Naive thymus-derived CD4-positive, alpha-beta T cell (primary cell): ENCODE measurements at regions of chr22 and their contacts with region 1.

Region 1: GRCh38 chr22:23385291-23386244 is 194.5 kb downstream of the IGLL1 start:
- DNase-seq: peak; percentile 48 to 84 (median 71)
- ATAC-seq: peak; percentile 84
- H3K4me3 ChIP-seq: no peak overlapping the region
- H3K4me3 Mint-ChIP-seq: no peak overlapping the region
- H3K27ac ChIP-seq: no peak overlapping the region
- H3K27ac Mint-ChIP-seq: no peak overlapping the region
- H3K4me1 ChIP-seq: no peaks in the 10 kb centered on the region
- H3K4me1 Mint-ChIP-seq: no peaks in the 10 kb centered on the region
- H3K27me3 ChIP-seq: no peaks in the 10 kb centered on the region
- H3K27me3 Mint-ChIP-seq: no peaks in the 10 kb centered on the region

Region 2: DNA sequence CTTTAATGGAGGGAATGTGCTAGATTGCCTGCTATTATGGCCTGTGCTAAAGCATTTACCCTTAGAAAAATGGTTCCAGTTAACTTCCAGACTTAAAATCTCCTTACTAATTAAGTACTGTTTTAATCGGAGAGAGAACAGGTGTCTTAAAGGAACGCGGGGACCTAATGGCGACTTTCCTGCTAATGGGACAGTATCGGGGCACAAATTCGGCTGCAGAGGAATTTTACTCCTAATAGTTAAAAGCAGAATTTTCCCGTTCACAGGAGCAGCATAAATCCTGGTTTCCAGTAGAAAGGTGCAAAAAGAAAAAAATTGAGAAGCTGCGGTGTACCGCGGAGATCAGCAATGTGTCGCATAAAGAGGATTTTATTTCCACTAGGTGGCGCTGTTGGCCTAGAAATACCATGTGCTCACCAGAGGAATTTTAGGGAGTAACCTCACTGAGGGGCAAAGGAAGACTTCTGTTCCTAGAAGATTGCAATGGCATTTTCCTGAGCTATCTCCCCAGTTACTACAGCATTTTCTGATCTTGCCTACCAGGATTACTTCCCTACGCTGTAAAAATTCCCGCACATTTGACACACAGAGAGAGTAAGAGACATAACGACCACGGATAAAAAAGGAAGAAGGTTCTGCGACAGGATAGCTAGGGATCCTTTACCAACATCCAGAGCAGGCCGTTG is 921.6 kb before region 1 on chr22:
- CTCF ChIA-PET with region 1: no interaction called
- POLR2A ChIA-PET with region 1: no interaction called
- intact Hi-C with region 1: no loop called
- DNase-seq: peak; percentile 10 to 55 (median 42)
- ATAC-seq: peak; percentile 44
- H3K4me3 ChIP-seq: no peak overlapping the region
- H3K4me3 Mint-ChIP-seq: no peak overlapping the region
- H3K27ac ChIP-seq: no peak overlapping the region
- H3K27ac Mint-ChIP-seq: no peak overlapping the region
- H3K4me1 ChIP-seq: no peaks in the 10 kb centered on the region
- H3K4me1 Mint-ChIP-seq: no peaks in the 10 kb centered on the region
- H3K27me3 ChIP-seq: peaks cover 0 to 11% of the 10 kb centered on the region in 2 donors
- H3K27me3 Mint-ChIP-seq: peaks cover 27 to 50% (median 48%) of the 10 kb centered on the region in 5 donors

Region 3: GRCh38 chr22:22913989-22914388 is 471.6 kb before region 1 on chr22:
- CTCF ChIA-PET with region 1: no interaction called
- POLR2A ChIA-PET with region 1: no interaction called
- intact Hi-C with region 1: no loop called
- DNase-seq: no peak
- ATAC-seq: no peak
- H3K4me3 ChIP-seq: no peak overlapping the region
- H3K4me3 Mint-ChIP-seq: no peak overlapping the region
- H3K27ac ChIP-seq: no peak overlapping the region
- H3K27ac Mint-ChIP-seq: no peak overlapping the region
- H3K4me1 ChIP-seq: no peaks in the 10 kb centered on the region
- H3K4me1 Mint-ChIP-seq: peaks cover 0 to 2% (median 0%) of the 10 kb centered on the region in 7 donors
- H3K27me3 ChIP-seq: no peaks in the 10 kb centered on the region
- H3K27me3 Mint-ChIP-seq: peaks cover 0 to 15% (median 0%) of the 10 kb centered on the region in 5 donors

Region 4: GRCh38 chr22:23128269-23129108 is 257.1 kb before region 1 on chr22:
- CTCF ChIA-PET with region 1: interaction called, 4 read pairs
- POLR2A ChIA-PET with region 1: no interaction called
- intact Hi-C with region 1: loop called in 1 of 2 experiments (anchors 1 kb)
- DNase-seq: peak; percentile 46 to 74 (median 68)
- ATAC-seq: peak; percentile 92
- H3K4me3 ChIP-seq: no peak overlapping the region
- H3K4me3 Mint-ChIP-seq: no peak overlapping the region
- H3K27ac ChIP-seq: no peak overlapping the region
- H3K27ac Mint-ChIP-seq: peak overlapping the region in 1 of 9 donors; percentile 82
- H3K4me1 ChIP-seq: no peaks in the 10 kb centered on the region
- H3K4me1 Mint-ChIP-seq: peaks cover 0 to 5% (median 0%) of the 10 kb centered on the region in 7 donors
- H3K27me3 ChIP-seq: no peaks in the 10 kb centered on the region
- H3K27me3 Mint-ChIP-seq: peaks cover 0 to 6% (median 0%) of the 10 kb centered on the region in 5 donors

Region 5: GRCh38 chr22:23281406-23282088 is 104.0 kb before region 1 on chr22:
- CTCF ChIA-PET with region 1: no interaction called
- POLR2A ChIA-PET with region 1: no interaction called
- intact Hi-C with region 1: loop called in 1 of 2 experiments (anchors 10 kb)
- DNase-seq: peak; percentile 57 to 80 (median 73)
- ATAC-seq: peak; percentile 86
- H3K4me3 ChIP-seq: no peak overlapping the region
- H3K4me3 Mint-ChIP-seq: no peak overlapping the region
- H3K27ac ChIP-seq: no peak overlapping the region
- H3K27ac Mint-ChIP-seq: no peak overlapping the region
- H3K4me1 ChIP-seq: peaks cover 7 to 27% of the 10 kb centered on the region in 2 donors
- H3K4me1 Mint-ChIP-seq: peaks cover 0 to 29% (median 9%) of the 10 kb centered on the region in 7 donors
- H3K27me3 ChIP-seq: no peaks in the 10 kb centered on the region
- H3K27me3 Mint-ChIP-seq: no peaks in the 10 kb centered on the region

Region 6: DNA sequence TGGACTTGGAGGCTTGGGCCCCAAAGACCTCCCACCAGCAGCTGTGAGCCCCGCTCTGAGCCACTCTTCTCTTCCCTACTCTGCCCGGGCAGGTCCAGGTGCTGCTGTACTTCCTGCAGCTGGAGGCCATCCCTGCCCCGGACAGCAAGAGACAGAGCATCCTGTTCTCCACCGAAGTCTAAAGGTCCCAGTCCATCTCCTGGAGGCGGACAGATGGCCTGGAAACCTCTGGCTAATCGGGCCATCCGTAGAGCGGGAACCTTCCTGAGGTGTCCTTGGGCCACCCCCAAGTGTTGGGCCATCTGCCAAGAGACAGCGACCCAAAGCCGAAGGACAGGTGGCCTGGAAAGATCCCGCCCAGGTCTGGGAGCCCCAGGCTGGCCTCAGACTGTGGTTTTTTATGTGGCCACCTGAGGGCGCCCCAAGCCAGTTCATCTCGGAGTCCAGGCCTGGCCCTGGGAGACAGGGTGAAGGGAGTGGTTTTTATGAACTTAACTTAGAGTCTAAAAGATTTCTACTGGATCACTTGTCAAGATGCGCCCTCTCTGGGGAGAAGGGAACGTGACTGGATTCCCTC is 70.1 kb before region 1 on chr22:
- CTCF ChIA-PET with region 1: no interaction called
- POLR2A ChIA-PET with region 1: no interaction called
- intact Hi-C with region 1: loop called (anchors 1 kb)
- DNase-seq: peak in 8 of 9 donors; percentile 24 to 56 (median 39)
- ATAC-seq: no peak
- H3K4me3 ChIP-seq: no peak overlapping the region
- H3K4me3 Mint-ChIP-seq: no peak overlapping the region
- H3K27ac ChIP-seq: no peak overlapping the region
- H3K27ac Mint-ChIP-seq: no peak overlapping the region
- H3K4me1 ChIP-seq: no peaks in the 10 kb centered on the region
- H3K4me1 Mint-ChIP-seq: no peaks in the 10 kb centered on the region
- H3K27me3 ChIP-seq: no peaks in the 10 kb centered on the region
- H3K27me3 Mint-ChIP-seq: no peaks in the 10 kb centered on the region

Region 7: GRCh38 chr22:23373601-23374000 is 12.0 kb before region 1 on chr22:
- CTCF ChIA-PET with region 1: interaction called, 13 read pairs
- POLR2A ChIA-PET with region 1: no interaction called
- intact Hi-C with region 1: no loop called
- DNase-seq: no peak
- ATAC-seq: no peak
- H3K4me3 ChIP-seq: no peak overlapping the region
- H3K4me3 Mint-ChIP-seq: no peak overlapping the region
- H3K27ac ChIP-seq: no peak overlapping the region
- H3K27ac Mint-ChIP-seq: no peak overlapping the region
- H3K4me1 ChIP-seq: no peaks in the 10 kb centered on the region
- H3K4me1 Mint-ChIP-seq: no peaks in the 10 kb centered on the region
- H3K27me3 ChIP-seq: no peaks in the 10 kb centered on the region
- H3K27me3 Mint-ChIP-seq: peaks cover 6 to 20% (median 14%) of the 10 kb centered on the region in 5 donors